ENCODE measurements at regions of chr11 and their contacts with region 1.

Region 1: DNA sequence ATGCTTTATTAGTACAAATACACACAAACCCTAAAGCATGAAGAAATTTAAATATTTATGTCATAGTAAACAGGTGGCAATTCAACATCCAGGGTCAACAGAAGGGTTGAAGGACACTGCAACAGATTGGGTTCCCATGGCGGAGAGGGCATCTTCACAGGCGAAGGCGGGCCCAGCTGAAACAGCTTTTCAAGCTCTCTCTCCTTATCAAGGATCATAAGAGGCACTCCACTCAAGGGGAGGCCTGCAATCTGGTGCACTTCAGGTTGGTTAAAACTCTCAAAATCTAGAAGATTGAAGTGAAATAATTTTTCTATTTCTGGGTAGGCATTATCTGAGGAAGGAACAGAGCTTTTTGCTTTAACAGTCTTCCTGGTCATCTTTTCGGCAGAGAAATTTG is 16.8 kb upstream of the SLC22A8 start:
- DNase-seq: peak in 1 of 4 donors; percentile 49
- ATAC-seq: peak; percentile 73
- H3K4me3 ChIP-seq: no peak overlapping the region
- H3K27ac ChIP-seq: no peak overlapping the region
- H3K4me1 ChIP-seq: peaks cover 0 to 3% of the 10 kb centered on the region in 2 donors
- H3K27me3 ChIP-seq: no peaks in the 10 kb centered on the region
- CTCF ChIP-seq: no peak

Region 2: GRCh38 chr11:63212742-63213141 is 180.3 kb after region 1 on chr11:
- intact Hi-C with region 1: loop called in 1 of 2 experiments (anchors 10 kb)
- DNase-seq: no peak
- ATAC-seq: no peak
- H3K4me3 ChIP-seq: no peak overlapping the region
- H3K27ac ChIP-seq: no peak overlapping the region
- H3K4me1 ChIP-seq: no peaks in the 10 kb centered on the region
- H3K27me3 ChIP-seq: no peaks in the 10 kb centered on the region
- CTCF ChIP-seq: peak; percentile 34 to 40